ENCODE measurements at regions of chr12 and their contacts with region 1.

Region 1: DNA sequence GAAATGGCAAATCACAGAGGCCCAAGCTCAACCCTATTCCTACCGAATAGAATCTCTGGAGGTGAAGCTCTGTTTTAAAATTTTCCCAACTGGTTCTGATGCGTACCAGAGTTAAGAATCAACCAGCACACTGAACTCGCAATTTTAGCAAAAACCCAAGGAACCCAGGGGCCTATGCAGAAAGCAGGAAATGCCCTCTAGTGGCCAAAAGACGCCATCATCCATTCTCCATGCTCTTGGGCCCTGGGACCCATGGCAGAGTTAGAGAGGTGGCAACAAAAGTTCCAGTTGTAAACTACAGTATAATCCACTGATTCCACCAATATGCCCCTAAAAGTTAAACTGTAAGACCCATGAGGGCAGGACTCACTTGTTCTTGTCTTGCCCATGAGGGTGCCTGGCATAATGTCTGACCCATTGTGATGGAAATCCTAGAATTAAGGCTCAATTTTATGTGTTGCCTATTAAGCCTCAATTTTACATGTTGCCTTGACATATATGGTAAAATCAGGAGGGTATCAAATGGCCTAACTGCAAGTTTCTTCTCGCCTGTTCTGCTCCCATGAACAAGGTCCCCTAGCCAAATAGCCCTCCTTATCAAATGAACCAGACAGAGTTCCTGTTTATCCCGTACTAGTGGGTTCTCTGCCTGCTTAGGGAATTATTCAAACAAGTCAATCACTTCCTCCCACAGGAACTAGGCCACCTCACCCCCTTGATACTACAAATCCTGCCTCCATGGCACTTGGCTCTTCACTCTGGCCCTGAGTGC is 137.5 kb upstream of the CPM start:
- DNase-seq: peak in 8 of 10 donors; percentile 15 to 92 (median 68)

Region 2: DNA sequence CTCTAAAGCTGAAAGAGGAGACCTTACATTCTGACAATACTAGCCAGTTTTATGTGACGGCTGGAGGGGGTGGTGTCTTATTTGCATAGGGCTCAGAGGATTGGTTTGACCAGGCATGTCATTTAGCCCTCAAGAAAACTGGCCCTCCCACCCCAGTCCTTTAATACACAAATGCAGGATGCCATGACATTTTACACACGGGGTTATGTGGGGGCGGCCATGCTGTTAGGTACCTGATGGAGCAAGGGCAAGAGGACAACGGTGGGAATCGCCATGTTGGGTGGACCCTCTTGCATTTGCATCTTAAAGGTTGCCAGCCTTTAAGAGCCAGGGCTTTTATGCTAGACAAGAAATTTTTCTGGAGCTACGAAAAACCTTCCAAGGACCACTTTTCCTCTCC is 239.2 kb before region 1 on chr12:
- intact Hi-C with region 1: loop called (anchors 1 kb)
- DNase-seq: no peak

Region 3: GRCh38 chr12:68864604-68865003 is 205.9 kb before region 1 on chr12:
- intact Hi-C with region 1: loop called (anchors 1 kb)
- DNase-seq: no peak

Region 4: GRCh38 chr12:68932961-68933893 is 137.3 kb before region 1 on chr12 and contains the start of gene CPM:
- intact Hi-C with region 1: no loop called
- DNase-seq: peak; percentile 43 to 97 (median 66)